CD8-positive, alpha-beta T cell (primary cell): ENCODE measurements at regions of chr5 and their contacts with region 1.

Region 1: GRCh38 chr5:134904630-134905245 is at the start of gene PCBD2:
- DNase-seq: peak; percentile 88 to 96 (median 91)
- ATAC-seq: peak; percentile 86
- H3K4me3 ChIP-seq: peak within 1 kb of the TSS; percentile 59 to 63
- H3K4me3 Mint-ChIP-seq: peak within 1 kb of the TSS; percentile 98
- H3K27ac ChIP-seq: peak within 1 kb of the TSS; percentile 86 to 89
- H3K27ac Mint-ChIP-seq: peak within 1 kb of the TSS; percentile 99
- H3K4me1 ChIP-seq: peaks cover 4% of the 10 kb centered on the region
- H3K4me1 Mint-ChIP-seq: peaks cover 10% of the 10 kb centered on the region
- H3K27me3 ChIP-seq: no peaks in the 10 kb centered on the region
- H3K27me3 Mint-ChIP-seq: no peaks in the 10 kb centered on the region
- CTCF ChIP-seq: peak; percentile 67
- total RNA-seq, gene PCBD2: 4.2 to 4.4 TPM

Region 2: GRCh38 chr5:132963175-132964104 is 1941.3 kb before region 1 on chr5 and contains the start of gene AFF4:
- CTCF ChIA-PET with region 1: no interaction called
- POLR2A ChIA-PET with region 1: no interaction called
- intact Hi-C with region 1: loop called in 1 of 2 experiments (anchors 5 kb)
- DNase-seq: peak; percentile 69 to 93 (median 84)
- ATAC-seq: peak; percentile 75
- H3K4me3 ChIP-seq: peak within 1 kb of the TSS; percentile 52 to 71
- H3K4me3 Mint-ChIP-seq: peak within 1 kb of the TSS; percentile 95
- H3K27ac ChIP-seq: peak within 1 kb of the TSS; percentile 84 to 92
- H3K27ac Mint-ChIP-seq: peak within 1 kb of the TSS; percentile 99
- H3K4me1 ChIP-seq: peaks cover 35% of the 10 kb centered on the region
- H3K4me1 Mint-ChIP-seq: peaks cover 43% of the 10 kb centered on the region
- H3K27me3 ChIP-seq: no peaks in the 10 kb centered on the region
- H3K27me3 Mint-ChIP-seq: no peaks in the 10 kb centered on the region
- CTCF ChIP-seq: no peak
- total RNA-seq, gene AFF4: 98.0 to 104 TPM

Region 3: DNA sequence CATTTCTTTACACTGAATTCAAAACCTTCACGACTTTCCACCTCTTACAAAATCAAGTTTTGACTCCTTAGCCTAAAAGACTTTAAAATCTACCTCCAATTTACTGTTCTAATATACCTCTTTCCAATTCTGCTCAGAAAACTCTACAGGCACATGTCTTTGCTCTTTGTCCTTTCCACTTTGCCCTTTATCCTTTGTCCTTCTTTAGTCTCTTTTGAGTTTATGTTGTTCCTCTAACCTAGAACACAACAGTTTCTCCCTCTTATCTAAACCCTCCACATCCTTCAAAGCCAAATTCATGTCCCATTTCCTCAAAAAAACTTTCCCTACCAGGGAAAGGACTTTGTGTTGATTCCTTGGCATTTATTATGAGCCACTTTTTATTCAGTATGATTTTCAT is 539.1 kb before region 1 on chr5:
- CTCF ChIA-PET with region 1: no interaction called
- POLR2A ChIA-PET with region 1: interaction called, 5 read pairs
- intact Hi-C with region 1: loop called (anchors 2 to 5 kb)
- DNase-seq: no peak
- ATAC-seq: no peak
- H3K4me3 ChIP-seq: no peak overlapping the region
- H3K4me3 Mint-ChIP-seq: peak overlapping the region; percentile 26
- H3K27ac ChIP-seq: no peak overlapping the region
- H3K27ac Mint-ChIP-seq: no peak overlapping the region
- H3K4me1 ChIP-seq: peaks cover 21% of the 10 kb centered on the region
- H3K4me1 Mint-ChIP-seq: peaks cover 31% of the 10 kb centered on the region
- H3K27me3 ChIP-seq: no peaks in the 10 kb centered on the region
- H3K27me3 Mint-ChIP-seq: no peaks in the 10 kb centered on the region
- CTCF ChIP-seq: no peak

Region 4: DNA sequence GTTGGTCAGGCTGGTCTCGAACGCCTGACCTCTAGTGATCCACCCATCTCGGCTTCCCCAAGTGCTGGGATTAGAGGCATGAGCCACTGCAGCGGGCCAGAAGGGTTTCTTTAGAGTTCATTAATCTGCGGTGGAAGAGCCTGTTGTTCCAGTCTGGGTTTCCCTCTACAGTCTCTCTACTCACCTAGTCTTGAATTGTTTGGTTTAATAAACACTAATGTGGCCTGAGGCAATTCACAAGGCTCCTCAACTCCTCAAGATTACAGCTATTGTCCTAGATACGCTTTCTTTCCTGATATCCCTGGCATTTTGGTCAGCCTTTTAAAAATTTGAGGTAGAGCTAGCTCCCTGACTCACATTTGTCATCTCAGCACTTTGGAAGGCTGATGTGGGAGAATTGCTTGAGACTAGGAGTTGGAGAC is 267.6 kb before region 1 on chr5:
- CTCF ChIA-PET with region 1: no interaction called
- POLR2A ChIA-PET with region 1: no interaction called
- intact Hi-C with region 1: loop called (anchors 1 kb)
- DNase-seq: no peak
- ATAC-seq: no peak
- H3K4me3 ChIP-seq: no peak overlapping the region
- H3K4me3 Mint-ChIP-seq: no peak overlapping the region
- H3K27ac ChIP-seq: no peak overlapping the region
- H3K27ac Mint-ChIP-seq: no peak overlapping the region
- H3K4me1 ChIP-seq: no peaks in the 10 kb centered on the region
- H3K4me1 Mint-ChIP-seq: peaks cover under 1% of the 10 kb centered on the region
- H3K27me3 ChIP-seq: no peaks in the 10 kb centered on the region
- H3K27me3 Mint-ChIP-seq: no peaks in the 10 kb centered on the region
- CTCF ChIP-seq: no peak

Region 5: GRCh38 chr5:134738133-134738962 is 166.4 kb before region 1 on chr5 and contains the start of gene CAMLG:
- CTCF ChIA-PET with region 1: interaction called, 11 read pairs
- POLR2A ChIA-PET with region 1: interaction called, 22 read pairs
- intact Hi-C with region 1: loop called in 1 of 2 experiments (anchors 1 kb)
- DNase-seq: peak; percentile 94 to 99 (median 97)
- ATAC-seq: peak; percentile 97
- H3K4me3 ChIP-seq: peak within 1 kb of the TSS; percentile 89 to 91
- H3K4me3 Mint-ChIP-seq: peak within 1 kb of the TSS; percentile 86
- H3K27ac ChIP-seq: peak within 1 kb of the TSS; percentile 79 to 92
- H3K27ac Mint-ChIP-seq: peak within 1 kb of the TSS; percentile 95
- H3K4me1 ChIP-seq: peaks cover 20% of the 10 kb centered on the region
- H3K4me1 Mint-ChIP-seq: peaks cover 35% of the 10 kb centered on the region
- H3K27me3 ChIP-seq: no peaks in the 10 kb centered on the region
- H3K27me3 Mint-ChIP-seq: no peaks in the 10 kb centered on the region
- CTCF ChIP-seq: peak; percentile 81
- total RNA-seq, gene CAMLG: 52.3 to 56.2 TPM

Region 6: DNA sequence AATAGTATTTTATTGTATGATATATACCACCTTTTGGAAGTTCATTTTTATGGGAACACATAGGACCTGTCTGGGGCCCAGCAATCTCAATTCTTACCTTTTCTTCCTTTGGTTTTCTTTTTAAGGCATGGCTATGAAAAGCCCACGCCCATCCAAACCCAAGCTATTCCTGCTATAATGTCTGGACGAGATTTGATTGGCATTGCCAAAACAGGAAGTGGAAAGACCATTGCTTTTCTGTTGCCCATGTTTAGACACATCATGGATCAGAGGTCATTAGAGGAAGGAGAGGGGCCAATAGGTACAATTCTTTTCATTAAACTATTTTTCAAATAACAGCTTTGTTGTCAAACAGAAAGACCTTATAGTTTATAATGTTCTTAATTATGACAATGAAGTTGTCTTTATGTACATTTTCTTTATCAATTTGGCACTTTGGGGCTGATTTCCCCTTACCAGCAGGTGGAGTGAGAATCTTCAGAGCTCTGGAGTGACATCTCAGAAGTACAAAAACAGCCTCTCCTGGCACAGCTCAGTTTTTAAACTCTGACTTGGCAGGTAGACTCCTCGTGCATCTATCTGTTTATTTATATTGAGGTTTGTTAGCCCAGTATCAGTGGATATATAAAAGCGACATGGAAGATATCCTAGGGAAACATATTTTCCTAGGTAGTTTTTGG is 120.4 kb before region 1 on chr5:
- CTCF ChIA-PET with region 1: interaction called, 8 read pairs
- POLR2A ChIA-PET with region 1: no interaction called
- intact Hi-C with region 1: loop called (anchors 1 kb)
- DNase-seq: peak in 2 of 9 experiments; percentile 32 to 47
- ATAC-seq: no peak
- H3K4me3 ChIP-seq: no peak overlapping the region
- H3K4me3 Mint-ChIP-seq: no peak overlapping the region
- H3K27ac ChIP-seq: no peak overlapping the region
- H3K27ac Mint-ChIP-seq: no peak overlapping the region
- H3K4me1 ChIP-seq: no peaks in the 10 kb centered on the region
- H3K4me1 Mint-ChIP-seq: no peaks in the 10 kb centered on the region
- H3K27me3 ChIP-seq: no peaks in the 10 kb centered on the region
- H3K27me3 Mint-ChIP-seq: no peaks in the 10 kb centered on the region
- CTCF ChIP-seq: no peak

Region 7: GRCh38 chr5:134873987-134874830 is 30.5 kb before region 1 on chr5 and contains the start of gene TXNDC15:
- CTCF ChIA-PET with region 1: interaction called, 7 read pairs
- POLR2A ChIA-PET with region 1: interaction called, 18 read pairs
- intact Hi-C with region 1: loop called (anchors 1 kb)
- DNase-seq: peak; percentile 61 to 91 (median 80)
- ATAC-seq: peak; percentile 92
- H3K4me3 ChIP-seq: peak within 1 kb of the TSS; percentile 59 to 92
- H3K4me3 Mint-ChIP-seq: peak within 1 kb of the TSS; percentile 92
- H3K27ac ChIP-seq: peak within 1 kb of the TSS; percentile 67 to 96
- H3K27ac Mint-ChIP-seq: peak within 1 kb of the TSS; percentile 94
- H3K4me1 ChIP-seq: peaks cover 36% of the 10 kb centered on the region
- H3K4me1 Mint-ChIP-seq: peaks cover 40% of the 10 kb centered on the region
- H3K27me3 ChIP-seq: no peaks in the 10 kb centered on the region
- H3K27me3 Mint-ChIP-seq: no peaks in the 10 kb centered on the region
- CTCF ChIP-seq: no peak
- total RNA-seq, gene TXNDC15: 19.8 to 21.0 TPM